ENCODE measurements at regions of chr1 and their contacts with region 1.

Region 1: DNA sequence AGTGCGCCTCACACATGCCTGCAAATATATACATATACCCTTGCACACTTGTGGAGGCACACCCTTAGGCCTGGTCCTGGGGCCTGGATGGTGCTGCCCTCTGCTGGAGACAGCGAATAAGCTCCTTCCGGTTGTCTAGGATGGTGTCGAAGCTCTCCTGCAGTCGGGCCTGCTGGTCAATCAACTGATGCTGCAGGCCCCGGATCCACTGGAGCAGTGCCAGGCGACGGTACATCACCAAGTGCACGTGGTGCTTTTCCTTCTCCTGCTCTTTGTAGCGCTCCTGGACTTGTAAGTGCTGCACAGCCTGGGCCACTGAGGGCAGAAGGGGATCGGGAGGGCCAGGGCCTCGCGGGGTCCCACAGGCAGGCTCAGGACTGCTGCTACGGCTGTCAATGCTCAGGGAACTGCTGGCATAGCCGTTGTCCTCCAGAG is 3.1 kb downstream of the C1orf216 start:
- DNase-seq: peak; percentile 43
- H3K4me3 ChIP-seq: 0 out of 2 replicates have a peak overlapping the region, but pooled peaks have one; percentile 20
- H3K27ac ChIP-seq: no peak overlapping the region
- H3K27me3 ChIP-seq: no peaks in the 10 kb centered on the region
- CTCF ChIP-seq: peak; percentile 87

Region 2: GRCh38 chr1:35451125-35451528 is 264.5 kb before region 1 on chr1:
- CTCF ChIA-PET with region 1: interaction called, 27 read pairs
- POLR2A ChIA-PET with region 1: no interaction called
- DNase-seq: peak; percentile 51
- H3K4me3 ChIP-seq: no peak overlapping the region
- H3K27ac ChIP-seq: peak overlapping the region; percentile 87
- H3K27me3 ChIP-seq: no peaks in the 10 kb centered on the region
- CTCF ChIP-seq: peak; percentile 89

Region 3: GRCh38 chr1:35577071-35577998 is 138.2 kb before region 1 on chr1:
- CTCF ChIA-PET with region 1: interaction called, 19 read pairs
- POLR2A ChIA-PET with region 1: interaction called, 3 read pairs
- DNase-seq: no peak
- H3K4me3 ChIP-seq: no peak overlapping the region
- H3K27ac ChIP-seq: no peak overlapping the region
- H3K27me3 ChIP-seq: peaks cover 49% of the 10 kb centered on the region
- CTCF ChIP-seq: no peak

Region 4: GRCh38 chr1:35656148-35656862 is 59.3 kb before region 1 on chr1:
- CTCF ChIA-PET with region 1: interaction called, 14 read pairs
- POLR2A ChIA-PET with region 1: no interaction called
- DNase-seq: no peak
- H3K4me3 ChIP-seq: no peak overlapping the region
- H3K27ac ChIP-seq: peak overlapping the region; percentile 52
- H3K27me3 ChIP-seq: peaks cover 12% of the 10 kb centered on the region
- CTCF ChIP-seq: no peak

Region 5: GRCh38 chr1:35691080-35691479 is 24.5 kb before region 1 on chr1:
- CTCF ChIA-PET with region 1: interaction called, 12 read pairs
- POLR2A ChIA-PET with region 1: no interaction called
- DNase-seq: no peak
- H3K4me3 ChIP-seq: no peak overlapping the region
- H3K27ac ChIP-seq: no peak overlapping the region
- H3K27me3 ChIP-seq: peaks cover 33% of the 10 kb centered on the region
- CTCF ChIP-seq: no peak

Region 6: DNA sequence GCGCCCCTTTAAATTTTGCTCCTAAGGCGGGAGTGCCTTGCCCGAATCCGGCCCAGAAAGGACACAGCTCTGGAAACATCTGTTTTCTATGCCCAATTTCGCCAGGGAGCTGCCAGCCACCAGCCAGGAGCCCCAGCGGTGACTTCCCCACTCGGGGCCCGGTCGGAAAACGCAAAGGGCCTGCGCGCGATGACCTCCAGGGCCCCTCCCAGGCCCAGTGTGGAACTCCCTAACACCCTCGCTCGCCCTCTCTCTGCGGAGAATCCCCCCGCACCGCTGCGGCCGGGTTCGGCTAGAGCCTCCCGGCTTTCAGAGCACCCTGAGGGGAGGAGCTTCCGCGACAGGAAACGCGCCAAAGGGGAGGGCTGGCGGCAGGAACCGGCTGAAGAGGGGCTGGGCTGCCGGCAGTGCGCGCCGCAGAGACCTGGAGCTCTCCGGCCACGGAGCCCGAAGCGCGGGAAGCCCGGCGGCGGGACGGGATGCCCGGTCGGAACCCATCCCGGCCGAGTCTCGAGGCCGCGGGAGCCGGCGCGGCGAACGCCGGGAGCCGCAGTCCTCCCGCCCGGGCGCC is 53.7 kb after region 1 on chr1:
- CTCF ChIA-PET with region 1: interaction called, 28 read pairs
- POLR2A ChIA-PET with region 1: interaction called, 9 read pairs
- DNase-seq: peak; percentile 55
- H3K4me3 ChIP-seq: peak overlapping the region; percentile 78
- H3K27ac ChIP-seq: peak overlapping the region; percentile 70
- H3K27me3 ChIP-seq: no peaks in the 10 kb centered on the region
- CTCF ChIP-seq: peak; percentile 36

Region 7: DNA sequence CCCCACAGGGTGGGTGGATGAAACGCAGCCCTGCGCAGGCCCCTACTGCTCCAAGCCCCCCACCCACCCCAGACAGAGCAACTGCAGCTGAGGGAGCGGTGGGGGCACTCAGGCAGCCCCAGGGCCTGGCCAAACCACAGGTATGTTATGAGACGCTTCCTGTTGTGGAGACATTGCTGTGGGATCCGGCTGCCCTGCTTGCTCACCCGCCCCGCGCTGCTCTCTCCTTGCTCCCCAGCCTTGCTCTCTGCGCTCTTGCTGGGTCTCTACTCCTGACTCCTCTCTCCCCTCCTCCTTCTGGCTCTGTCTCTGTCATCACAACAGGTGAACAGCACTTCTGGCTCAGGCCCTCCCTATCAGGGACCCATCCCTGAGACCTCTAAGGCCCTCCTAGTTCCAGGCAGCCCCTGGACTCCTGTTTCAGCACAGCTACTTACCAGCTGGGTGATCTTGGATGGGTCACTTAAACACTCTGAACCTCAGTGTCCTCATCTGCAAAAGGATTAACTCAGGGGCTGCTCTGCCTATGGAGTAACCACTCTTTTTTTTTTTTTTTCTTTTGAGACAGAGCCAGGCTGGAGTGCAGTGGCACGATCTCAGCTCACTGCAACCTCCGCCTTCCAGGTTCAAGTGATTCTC is 393.6 kb after region 1 on chr1:
- CTCF ChIA-PET with region 1: no interaction called
- POLR2A ChIA-PET with region 1: no interaction called
- DNase-seq: peak; percentile 18
- H3K4me3 ChIP-seq: no peak overlapping the region
- H3K27ac ChIP-seq: no peak overlapping the region
- H3K27me3 ChIP-seq: no peaks in the 10 kb centered on the region
- CTCF ChIP-seq: no peak

Region 8: GRCh38 chr1:36913523-36914060 is 1198.0 kb after region 1 on chr1:
- CTCF ChIA-PET with region 1: no interaction called
- POLR2A ChIA-PET with region 1: no interaction called
- DNase-seq: no peak
- H3K4me3 ChIP-seq: no peak overlapping the region
- H3K27ac ChIP-seq: no peak overlapping the region
- H3K27me3 ChIP-seq: no peaks in the 10 kb centered on the region
- CTCF ChIP-seq: no peak